Activated CD4-positive, alpha-beta memory T cell treated with anti-CD3 and anti-CD28 coated beads for 36 hours (primary cell): ENCODE measurements at regions of chr7 and their contacts with region 1.

Region 1: GRCh38 chr7:138002096-138002827 is 376 bp upstream of the CREB3L2 start:
- DNase-seq: peak; percentile 98
- H3K4me3 Mint-ChIP-seq: peak overlapping the region; percentile 94
- H3K27ac Mint-ChIP-seq: peak overlapping the region; percentile 87
- H3K4me1 Mint-ChIP-seq: peaks cover 31% of the 10 kb centered on the region
- H3K27me3 Mint-ChIP-seq: no peaks in the 10 kb centered on the region

Region 2: DNA sequence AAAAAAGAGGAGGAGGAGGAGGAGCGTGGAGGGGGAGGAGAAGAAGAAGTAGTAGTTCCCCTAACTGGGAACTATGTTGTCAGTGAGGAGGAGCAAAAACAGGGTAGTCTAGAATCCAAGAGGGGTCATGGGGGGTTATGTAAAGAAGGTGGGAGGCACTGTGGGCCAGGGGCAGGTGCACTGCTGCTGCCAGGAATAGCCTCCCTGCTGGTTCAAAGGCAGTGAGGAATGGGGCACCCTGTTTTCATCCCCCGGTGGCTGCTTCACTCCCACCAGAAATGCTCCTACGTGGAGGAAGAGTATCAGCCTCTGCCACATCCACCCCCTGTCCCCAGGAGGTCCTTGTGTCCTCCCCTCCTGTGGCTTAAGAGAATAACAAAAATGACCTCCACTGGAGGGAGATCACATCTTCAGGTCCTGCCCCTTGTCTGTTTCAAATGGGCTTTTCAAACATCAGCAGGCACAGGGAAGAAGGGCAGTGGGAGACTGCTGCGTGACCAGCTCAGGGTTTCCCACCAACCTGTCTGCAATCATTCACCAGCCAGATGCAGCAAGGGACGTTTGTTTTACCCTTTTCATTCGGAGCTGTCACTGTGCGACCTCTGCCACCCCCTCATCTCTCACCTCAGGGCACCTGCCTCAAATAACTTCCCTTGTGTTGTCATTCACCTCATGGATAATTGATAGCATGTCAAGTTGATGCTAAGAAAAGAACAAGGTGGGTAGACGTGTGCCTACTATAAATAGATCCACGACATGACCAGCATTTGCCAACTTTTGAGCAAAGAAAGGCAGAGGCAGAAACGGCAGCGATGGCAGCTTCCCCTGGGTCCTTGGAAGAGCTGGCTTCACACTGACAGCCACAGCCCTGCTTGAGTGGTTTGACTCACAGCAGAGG is 248.1 kb before region 1 on chr7:
- CTCF ChIA-PET with region 1: no interaction called
- POLR2A ChIA-PET with region 1: no interaction called
- intact Hi-C with region 1: no loop called
- DNase-seq: no peak
- H3K4me3 Mint-ChIP-seq: no peak overlapping the region
- H3K27ac Mint-ChIP-seq: no peak overlapping the region
- H3K4me1 Mint-ChIP-seq: no peaks in the 10 kb centered on the region
- H3K27me3 Mint-ChIP-seq: peaks cover 7% of the 10 kb centered on the region

Region 3: DNA sequence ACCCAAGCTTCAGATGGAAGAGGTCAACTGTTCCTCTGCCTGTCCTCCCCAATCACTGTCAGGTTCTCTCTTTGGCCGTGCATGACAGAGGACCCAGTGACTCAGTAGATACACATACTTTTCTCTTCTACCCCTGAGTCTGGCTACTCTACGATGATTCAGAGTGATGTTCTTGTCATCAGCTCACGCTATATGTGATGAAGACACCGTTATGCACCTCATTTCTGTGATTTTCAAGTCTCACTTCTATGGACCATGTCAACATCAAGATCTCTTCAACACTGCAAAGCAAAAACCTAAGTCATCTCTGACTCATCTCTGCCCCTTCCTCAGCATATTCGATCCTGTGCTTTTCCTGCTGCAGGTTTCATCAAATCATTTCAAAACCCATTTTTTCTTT is 78.9 kb before region 1 on chr7:
- CTCF ChIA-PET with region 1: interaction called, 15 read pairs
- POLR2A ChIA-PET with region 1: no interaction called
- intact Hi-C with region 1: loop called (anchors 1 kb)
- DNase-seq: peak; percentile 36
- H3K4me3 Mint-ChIP-seq: no peak overlapping the region
- H3K27ac Mint-ChIP-seq: peak overlapping the region; percentile 49
- H3K4me1 Mint-ChIP-seq: peaks cover 38% of the 10 kb centered on the region
- H3K27me3 Mint-ChIP-seq: no peaks in the 10 kb centered on the region

Region 4: DNA sequence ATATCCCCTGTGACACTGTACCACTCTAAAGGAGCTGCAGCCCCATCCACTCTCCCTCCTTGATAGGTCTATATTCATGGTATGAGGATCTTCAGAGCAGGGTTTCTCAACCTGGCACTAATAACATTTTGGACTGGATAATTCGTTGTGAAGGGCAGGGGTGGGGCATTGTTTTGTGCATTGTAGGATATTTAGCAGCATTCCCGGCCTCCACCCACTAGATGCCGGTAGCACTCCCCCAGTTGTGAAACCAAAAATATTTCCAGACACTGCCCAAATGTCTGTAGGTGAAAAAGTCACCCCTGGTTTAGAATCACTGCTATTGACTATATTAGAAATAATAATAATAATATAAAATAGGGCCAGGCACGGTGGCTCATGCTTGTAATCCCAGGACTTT is 73.0 kb before region 1 on chr7:
- CTCF ChIA-PET with region 1: interaction called, 15 read pairs
- POLR2A ChIA-PET with region 1: interaction called, 3 read pairs
- intact Hi-C with region 1: no loop called
- DNase-seq: no peak
- H3K4me3 Mint-ChIP-seq: no peak overlapping the region
- H3K27ac Mint-ChIP-seq: no peak overlapping the region
- H3K4me1 Mint-ChIP-seq: peaks cover 41% of the 10 kb centered on the region
- H3K27me3 Mint-ChIP-seq: no peaks in the 10 kb centered on the region

Region 5: GRCh38 chr7:137934941-137935883 is 67.0 kb before region 1 on chr7:
- CTCF ChIA-PET with region 1: interaction called, 8 read pairs
- POLR2A ChIA-PET with region 1: interaction called, 3 read pairs
- intact Hi-C with region 1: loop called (anchors 1 kb)
- DNase-seq: no peak
- H3K4me3 Mint-ChIP-seq: peak overlapping the region; percentile 65
- H3K27ac Mint-ChIP-seq: peak overlapping the region; percentile 84
- H3K4me1 Mint-ChIP-seq: peaks cover 53% of the 10 kb centered on the region
- H3K27me3 Mint-ChIP-seq: no peaks in the 10 kb centered on the region

Region 6: DNA sequence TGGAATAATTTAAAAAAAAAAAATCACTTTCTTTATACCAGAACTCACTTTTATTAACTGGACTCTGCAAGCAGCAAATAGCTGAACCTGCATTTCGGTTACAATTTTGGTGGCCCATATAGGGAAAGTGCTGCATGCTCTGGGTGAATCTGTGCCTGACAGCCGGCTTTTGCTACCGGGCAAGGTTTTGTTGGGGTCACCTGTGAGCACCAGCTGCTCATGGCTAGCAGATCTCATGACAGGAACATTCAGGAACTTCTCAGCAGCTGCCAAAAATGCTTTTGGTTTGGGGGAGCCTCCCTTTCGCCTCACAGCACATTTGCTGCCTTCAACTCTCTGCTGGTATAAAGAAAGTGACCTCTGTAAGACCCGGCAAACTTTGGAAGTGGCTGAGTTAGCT is 12.8 kb after region 1 on chr7:
- CTCF ChIA-PET with region 1: interaction called, 24 read pairs
- POLR2A ChIA-PET with region 1: no interaction called
- intact Hi-C with region 1: no loop called
- DNase-seq: no peak
- H3K4me3 Mint-ChIP-seq: no peak overlapping the region
- H3K27ac Mint-ChIP-seq: no peak overlapping the region
- H3K4me1 Mint-ChIP-seq: no peaks in the 10 kb centered on the region
- H3K27me3 Mint-ChIP-seq: no peaks in the 10 kb centered on the region

Region 7: DNA sequence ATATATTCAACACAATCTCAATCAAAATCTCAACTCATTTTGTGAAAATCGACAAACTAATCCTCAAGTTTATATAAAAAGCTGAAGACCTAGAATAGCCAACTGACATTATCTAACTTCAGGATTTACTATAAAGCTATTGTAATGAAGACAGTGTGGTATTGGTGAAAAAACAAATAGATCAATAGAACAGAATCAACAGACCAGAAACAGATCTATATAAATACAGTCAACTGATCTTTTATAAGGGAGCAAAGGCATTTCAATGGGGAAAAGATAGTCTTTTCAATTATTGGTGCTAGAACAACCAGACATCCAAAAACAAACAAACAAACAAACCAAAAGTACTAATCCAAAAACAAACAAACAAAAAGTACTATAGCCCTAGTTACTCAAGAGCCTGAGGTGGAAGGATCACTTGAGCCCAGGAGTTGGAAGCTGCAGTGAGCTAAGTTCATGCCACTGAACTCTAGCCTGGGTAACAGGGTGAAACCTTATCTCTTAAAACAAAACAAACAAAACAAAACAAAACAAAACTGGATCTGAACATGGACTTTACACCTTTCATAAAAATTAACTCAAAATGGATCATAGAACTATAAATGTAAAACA is 47.3 kb after region 1 on chr7:
- CTCF ChIA-PET with region 1: no interaction called
- POLR2A ChIA-PET with region 1: no interaction called
- intact Hi-C with region 1: no loop called
- DNase-seq: no peak
- H3K4me3 Mint-ChIP-seq: no peak overlapping the region
- H3K27ac Mint-ChIP-seq: no peak overlapping the region
- H3K4me1 Mint-ChIP-seq: no peaks in the 10 kb centered on the region
- H3K27me3 Mint-ChIP-seq: peaks cover 8% of the 10 kb centered on the region

Region 8: DNA sequence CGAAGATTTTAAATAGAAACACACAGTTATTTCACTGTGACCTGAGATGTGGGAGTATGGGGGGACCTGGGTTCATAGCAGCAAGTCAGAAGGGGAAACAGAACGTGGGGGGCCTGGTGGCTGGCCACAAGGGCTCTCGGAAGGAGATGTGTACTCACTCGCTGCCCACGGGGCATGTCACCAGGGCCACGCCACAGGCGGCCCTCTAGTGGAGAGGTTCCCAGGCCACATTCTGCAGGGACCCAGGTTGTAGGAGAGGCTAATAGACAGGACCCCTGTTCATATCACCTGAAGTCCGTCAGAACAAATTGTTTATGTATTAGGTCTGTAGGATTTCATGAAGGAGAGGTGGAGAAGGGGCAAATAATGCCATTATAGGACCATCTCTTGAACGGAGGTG is 724.0 kb after region 1 on chr7:
- CTCF ChIA-PET with region 1: no interaction called
- POLR2A ChIA-PET with region 1: no interaction called
- intact Hi-C with region 1: no loop called
- DNase-seq: no peak
- H3K4me3 Mint-ChIP-seq: no peak overlapping the region
- H3K27ac Mint-ChIP-seq: no peak overlapping the region
- H3K4me1 Mint-ChIP-seq: no peaks in the 10 kb centered on the region
- H3K27me3 Mint-ChIP-seq: no peaks in the 10 kb centered on the region

Region 9: DNA sequence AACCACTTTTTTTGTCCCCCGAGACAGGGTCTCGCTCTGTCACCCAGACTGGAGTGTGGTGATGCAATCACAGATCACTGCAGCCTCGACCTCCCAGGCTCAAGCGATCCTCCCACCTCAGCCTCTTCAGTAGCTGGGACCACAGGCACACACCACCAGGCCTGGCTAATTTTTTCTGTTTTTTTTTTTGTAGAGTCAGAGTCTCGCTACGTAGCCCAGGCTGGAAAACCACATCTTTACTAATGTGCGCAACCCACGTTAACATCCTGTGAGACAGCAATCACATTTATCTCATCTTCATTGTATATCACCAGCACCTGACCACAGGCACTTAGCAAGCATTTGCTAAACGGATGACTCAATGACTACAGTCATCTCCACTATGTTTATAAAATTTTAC is 873.5 kb after region 1 on chr7:
- CTCF ChIA-PET with region 1: interaction called, 3 read pairs
- POLR2A ChIA-PET with region 1: no interaction called
- intact Hi-C with region 1: loop called (anchors 5 kb)
- DNase-seq: peak; percentile 80
- H3K4me3 Mint-ChIP-seq: peak overlapping the region; percentile 29
- H3K27ac Mint-ChIP-seq: peak overlapping the region; percentile 85
- H3K4me1 Mint-ChIP-seq: peaks cover 25% of the 10 kb centered on the region
- H3K27me3 Mint-ChIP-seq: no peaks in the 10 kb centered on the region